ENCODE measurements at regions of chr10 and their contacts with region 1.

Region 1: DNA sequence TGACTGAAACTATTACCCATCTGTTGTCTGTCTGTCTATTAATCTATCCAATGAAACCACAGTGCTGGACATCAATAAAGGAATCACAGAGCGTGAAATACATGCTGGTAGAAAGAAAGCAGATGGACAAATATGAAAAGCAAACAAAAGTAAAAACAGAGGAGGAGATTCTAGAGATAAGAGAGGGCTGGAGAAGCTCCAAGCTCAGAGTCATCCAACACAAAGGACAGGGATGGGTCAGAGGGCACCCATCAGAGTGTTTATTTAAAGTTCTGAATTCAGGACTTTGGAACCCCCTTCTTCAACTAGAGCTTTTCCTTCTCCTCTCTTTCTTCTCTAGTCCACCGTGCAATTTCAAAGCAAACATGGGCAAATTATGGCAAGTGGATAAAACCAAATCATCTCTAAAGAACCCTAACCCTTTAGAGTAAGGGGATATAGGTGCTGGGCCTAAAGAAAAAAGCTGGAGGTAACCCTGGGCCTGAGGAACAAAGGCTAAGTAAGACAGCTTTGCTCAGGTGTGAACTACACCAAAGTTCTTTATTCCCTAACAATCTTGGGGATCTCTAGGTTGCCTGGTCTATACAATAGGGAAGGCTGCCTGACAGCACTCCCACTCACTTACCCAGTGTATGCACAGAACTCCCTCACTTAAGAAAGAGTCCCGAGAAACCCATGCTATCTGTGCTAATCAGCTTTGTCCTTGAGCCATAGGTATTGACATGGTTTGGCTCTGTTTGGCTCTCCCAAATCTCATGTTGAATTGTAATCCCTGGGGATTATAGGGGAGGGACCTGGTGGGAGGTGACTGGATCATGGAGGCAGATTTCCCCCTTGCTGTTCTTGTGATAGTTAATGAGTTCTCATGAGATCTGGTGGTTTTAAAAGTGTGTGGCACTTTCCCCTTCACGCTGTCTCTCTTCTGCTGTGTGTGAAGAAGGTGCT is 97.0 kb downstream of the BAMBI start:
- DNase-seq: peak; percentile 74
- ATAC-seq: peak; percentile 72
- H3K4me3 ChIP-seq: no peak overlapping the region
- H3K27ac ChIP-seq: no peak overlapping the region
- H3K4me1 ChIP-seq: peaks cover 45% of the 10 kb centered on the region
- H3K27me3 ChIP-seq: no peaks in the 10 kb centered on the region
- CTCF ChIP-seq: no peak
- EP300 ChIP-seq: peak in 1 of 2 experiments; percentile 64; a peak in 1 of 4 replicates
- POLR2A ChIP-seq: no peak
- RAD21 ChIP-seq: no peak

Region 2: GRCh38 chr10:27736396-27736795 is 1037.9 kb before region 1 on chr10:
- CTCF ChIA-PET with region 1: no interaction called
- POLR2A ChIA-PET with region 1: no interaction called
- in situ Hi-C with region 1: no loop called
- intact Hi-C with region 1: loop called (anchors 10 kb)
- DNase-seq: no peak
- ATAC-seq: no peak
- H3K4me3 ChIP-seq: no peak overlapping the region
- H3K27ac ChIP-seq: no peak overlapping the region
- H3K4me1 ChIP-seq: no peaks in the 10 kb centered on the region
- H3K27me3 ChIP-seq: peaks cover 0 to 2% of the 10 kb centered on the region in 2 experiments; a peak in 2 of 5 replicates
- CTCF ChIP-seq: no peak
- EP300 ChIP-seq: no peak
- POLR2A ChIP-seq: no peak
- RAD21 ChIP-seq: no peak